ENCODE measurements at regions of chr6 and their contacts with region 1.

Region 1: DNA sequence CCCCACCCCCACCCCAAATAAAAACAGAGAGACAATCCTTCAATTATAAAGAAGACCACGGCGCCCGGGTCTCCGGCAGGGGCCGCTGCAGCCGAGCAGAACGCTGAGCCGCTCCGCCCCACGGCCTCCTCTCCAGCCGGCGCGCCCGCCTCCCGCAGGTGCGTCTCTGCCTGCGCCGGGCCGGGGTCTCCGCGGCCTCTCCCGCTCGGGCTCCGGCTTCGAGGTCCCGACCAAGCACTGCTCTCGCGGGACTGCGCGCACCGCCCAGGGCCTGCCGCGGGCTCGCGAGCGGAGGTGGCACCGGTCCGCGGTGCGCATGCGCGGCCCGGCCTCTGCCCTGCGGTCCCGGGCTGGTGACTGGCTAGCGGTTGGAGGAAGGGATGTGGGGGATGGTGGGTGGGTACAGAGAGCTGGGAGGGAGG is 241 bp upstream of the SIRT5 start:
- DNase-seq: peak; percentile 98
- H3K4me3 ChIP-seq: peak overlapping the region; percentile 76
- H3K27ac ChIP-seq: peak overlapping the region; percentile 89
- H3K4me1 ChIP-seq: peaks cover 23% of the 10 kb centered on the region
- CTCF ChIP-seq: peak; percentile 64

Region 2: GRCh38 chr6:13355043-13355951 is 218.9 kb before region 1 on chr6:
- CTCF ChIA-PET with region 1: no interaction called
- POLR2A ChIA-PET with region 1: interaction called, 7 read pairs
- intact Hi-C with region 1: loop called (anchors 5 kb)
- DNase-seq: peak; percentile 45
- H3K4me3 ChIP-seq: peak overlapping the region; percentile 54
- H3K27ac ChIP-seq: peak overlapping the region; percentile 89
- H3K4me1 ChIP-seq: peaks cover 58% of the 10 kb centered on the region
- CTCF ChIP-seq: no peak

Region 3: GRCh38 chr6:13454286-13455221 is 119.6 kb before region 1 on chr6:
- CTCF ChIA-PET with region 1: interaction called, 5 read pairs
- POLR2A ChIA-PET with region 1: interaction called, 9 read pairs
- intact Hi-C with region 1: loop called (anchors 2 kb)
- DNase-seq: peak; percentile 41
- H3K4me3 ChIP-seq: peak overlapping the region; percentile 6
- H3K27ac ChIP-seq: peak overlapping the region; percentile 28
- H3K4me1 ChIP-seq: peaks cover 60% of the 10 kb centered on the region
- CTCF ChIP-seq: peak; percentile 68

Region 4: GRCh38 chr6:13561624-13562267 is 12.4 kb before region 1 on chr6:
- CTCF ChIA-PET with region 1: interaction called, 5 read pairs
- POLR2A ChIA-PET with region 1: interaction called, 39 read pairs
- intact Hi-C with region 1: no loop called
- DNase-seq: no peak
- H3K4me3 ChIP-seq: no peak overlapping the region
- H3K27ac ChIP-seq: no peak overlapping the region
- H3K4me1 ChIP-seq: peaks cover 10% of the 10 kb centered on the region
- CTCF ChIP-seq: no peak

Region 5: GRCh38 chr6:13711733-13712598 is 137.8 kb after region 1 on chr6 and contains the start of gene RANBP9:
- CTCF ChIA-PET with region 1: no interaction called
- POLR2A ChIA-PET with region 1: interaction called, 4 read pairs
- intact Hi-C with region 1: loop called (anchors 1 kb)
- DNase-seq: peak; percentile 95
- H3K4me3 ChIP-seq: peak within 1 kb of the TSS; percentile 74
- H3K27ac ChIP-seq: peak within 1 kb of the TSS; percentile 78
- H3K4me1 ChIP-seq: peaks cover 20% of the 10 kb centered on the region
- CTCF ChIP-seq: no peak
- total RNA-seq, gene RANBP9: 20.5 and 22.2 TPM in 2 replicates

Region 6: DNA sequence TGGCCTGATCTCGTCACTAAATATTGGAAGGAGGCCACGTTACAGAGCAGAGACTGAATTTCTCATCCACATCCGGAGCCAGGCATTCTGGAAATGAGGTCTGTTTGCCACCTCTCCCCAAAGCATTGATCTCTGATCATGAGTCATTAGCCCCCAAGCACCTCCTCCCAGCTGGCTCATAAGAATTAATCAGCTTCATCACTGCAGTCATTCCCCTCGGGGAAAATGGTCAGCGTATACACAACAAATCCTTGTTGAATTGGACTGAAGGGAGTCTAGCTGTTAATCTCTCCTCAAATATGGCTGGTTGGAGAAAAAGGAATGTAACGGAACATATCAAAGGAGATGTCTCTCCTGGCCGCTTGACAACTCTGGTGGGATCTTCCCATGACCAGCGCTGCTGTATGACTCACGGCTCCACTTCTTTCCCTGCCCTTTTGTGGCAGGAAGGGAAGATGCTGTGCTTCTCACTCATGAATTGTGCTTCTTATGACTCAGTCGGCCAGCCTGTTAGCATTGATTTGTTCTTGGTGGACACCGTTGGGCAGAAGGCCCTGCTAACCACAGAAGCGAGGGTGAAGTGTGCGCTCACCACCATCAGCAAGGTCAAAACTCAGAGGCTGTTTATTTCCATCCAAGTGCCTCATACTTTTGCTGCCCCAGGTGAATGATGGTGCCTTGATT is 427.3 kb after region 1 on chr6:
- CTCF ChIA-PET with region 1: no interaction called
- POLR2A ChIA-PET with region 1: no interaction called
- intact Hi-C with region 1: no loop called
- DNase-seq: no peak
- H3K4me3 ChIP-seq: no peak overlapping the region
- H3K27ac ChIP-seq: no peak overlapping the region
- H3K4me1 ChIP-seq: no peaks in the 10 kb centered on the region
- CTCF ChIP-seq: no peak

Measured in OCI-LY7 (cell line).